ENCODE measurements at regions of chr2 and their contacts with region 1.

Region 1: DNA sequence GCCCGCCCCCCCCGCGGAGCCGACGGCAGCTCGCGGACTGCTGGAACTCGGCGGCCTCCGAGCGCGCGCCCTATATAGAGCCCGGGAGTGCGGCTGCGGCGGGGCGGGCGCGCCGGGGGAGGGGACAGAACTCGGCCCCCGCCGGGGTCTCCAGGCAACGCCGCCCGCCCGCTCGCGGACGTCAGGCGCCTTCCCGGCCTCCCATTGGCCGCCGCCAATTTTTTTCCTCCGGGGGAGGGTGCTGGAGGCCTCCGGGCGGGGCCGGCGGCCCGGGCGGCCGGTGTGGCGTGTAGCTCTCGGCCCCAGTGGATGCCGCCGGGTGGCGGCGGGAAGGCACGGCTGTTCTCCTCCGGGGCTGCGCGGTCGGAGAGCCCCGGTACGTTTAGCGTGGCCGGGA is at the start of gene ZFP36L2:
- DNase-seq: peak; percentile 95 to 96
- ATAC-seq: peak; percentile 60 to 83 (median 74)
- H3K4me3 ChIP-seq: peak within 1 kb of the TSS; percentile 97
- H3K4me3 Mint-ChIP-seq: peak within 1 kb of the TSS; percentile 98
- H3K27ac ChIP-seq: peak within 1 kb of the TSS; percentile 97
- H3K27ac Mint-ChIP-seq: peak within 1 kb of the TSS; percentile 90 to 99
- H3K4me1 ChIP-seq: peaks cover 32% of the 10 kb centered on the region
- H3K4me1 Mint-ChIP-seq: peaks cover 44 to 50% of the 10 kb centered on the region in 2 donors
- H3K27me3 ChIP-seq: no peaks in the 10 kb centered on the region
- H3K27me3 Mint-ChIP-seq: no peaks in the 10 kb centered on the region
- CTCF ChIP-seq: no peak
- total RNA-seq, gene ZFP36L2: 376 to 428 (median 418) TPM

Region 2: GRCh38 chr2:42944779-42945415 is 281.7 kb before region 1 on chr2:
- intact Hi-C with region 1: loop called (anchors 1 kb)
- DNase-seq: no peak
- ATAC-seq: no peak
- H3K4me3 ChIP-seq: no peak overlapping the region
- H3K4me3 Mint-ChIP-seq: no peak overlapping the region
- H3K27ac ChIP-seq: no peak overlapping the region
- H3K27ac Mint-ChIP-seq: no peak overlapping the region
- H3K4me1 ChIP-seq: peaks cover 9% of the 10 kb centered on the region
- H3K4me1 Mint-ChIP-seq: peaks cover 5 to 16% of the 10 kb centered on the region in 2 donors
- H3K27me3 ChIP-seq: no peaks in the 10 kb centered on the region
- H3K27me3 Mint-ChIP-seq: peaks cover 0 to 3% of the 10 kb centered on the region in 2 donors
- CTCF ChIP-seq: no peak

Region 3: DNA sequence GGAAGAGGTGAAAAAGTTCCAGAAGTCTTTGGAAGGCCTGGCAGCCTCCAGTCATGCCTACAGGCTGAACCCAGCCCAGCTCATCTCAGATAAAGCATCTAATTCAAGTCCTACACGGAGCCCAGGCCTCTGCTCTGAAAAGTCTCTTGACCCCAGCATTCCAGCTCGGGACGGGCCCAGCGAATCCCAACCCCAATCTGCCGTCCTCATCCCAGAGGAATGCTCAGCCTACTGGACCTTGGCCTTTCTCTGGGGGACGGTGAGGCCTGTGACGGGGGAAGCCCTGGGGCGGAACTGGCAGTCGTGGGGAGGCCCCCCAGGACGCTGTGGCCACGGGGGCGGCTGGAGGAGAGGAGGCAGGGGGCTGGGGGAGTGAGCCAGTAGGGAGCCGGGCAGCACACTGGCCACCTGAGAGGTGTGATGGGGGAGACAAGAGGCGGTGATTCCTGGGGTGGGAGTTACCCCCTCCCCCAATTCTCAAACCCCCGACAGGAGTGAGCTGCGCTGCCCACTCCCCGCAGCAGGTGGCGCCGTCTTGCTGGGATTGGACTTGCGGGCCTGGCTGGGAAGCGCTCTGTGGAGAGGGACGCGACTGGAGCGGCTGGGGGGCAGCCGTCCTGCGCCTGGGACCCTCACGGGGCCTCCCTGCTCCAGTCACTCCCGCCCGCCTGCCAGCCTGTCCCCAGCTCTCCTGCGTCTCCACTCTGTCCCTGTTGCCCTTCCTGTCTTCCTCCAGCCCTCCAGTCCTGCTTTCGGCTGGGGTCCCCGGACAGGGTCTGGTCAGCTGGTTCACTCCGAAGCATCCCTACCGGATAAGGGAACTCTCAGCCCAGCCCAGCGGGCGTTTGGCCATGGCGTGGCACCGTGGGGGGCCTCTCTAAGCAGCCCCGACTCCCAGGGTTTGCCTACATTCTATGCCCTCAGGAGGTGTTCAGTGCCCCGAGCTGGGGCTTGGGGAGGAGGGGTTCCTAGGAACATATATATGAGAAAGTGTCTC is 251.5 kb before region 1 on chr2:
- intact Hi-C with region 1: loop called (anchors 1 kb)
- DNase-seq: peak; percentile 39 to 70
- ATAC-seq: peak; percentile 40 to 78 (median 70)
- H3K4me3 ChIP-seq: no peak overlapping the region
- H3K4me3 Mint-ChIP-seq: no peak overlapping the region
- H3K27ac ChIP-seq: no peak overlapping the region
- H3K27ac Mint-ChIP-seq: no peak overlapping the region
- H3K4me1 ChIP-seq: peaks cover 23% of the 10 kb centered on the region
- H3K4me1 Mint-ChIP-seq: peaks cover 6 to 10% of the 10 kb centered on the region in 2 donors
- H3K27me3 ChIP-seq: no peaks in the 10 kb centered on the region
- H3K27me3 Mint-ChIP-seq: peaks cover 0 to 12% of the 10 kb centered on the region in 2 donors
- CTCF ChIP-seq: peak; percentile 67

Region 4: GRCh38 chr2:43269074-43269572 is 42.6 kb after region 1 on chr2:
- intact Hi-C with region 1: no loop called
- DNase-seq: no peak
- ATAC-seq: no peak
- H3K4me3 ChIP-seq: no peak overlapping the region
- H3K4me3 Mint-ChIP-seq: no peak overlapping the region
- H3K27ac ChIP-seq: no peak overlapping the region
- H3K27ac Mint-ChIP-seq: no peak overlapping the region
- H3K4me1 ChIP-seq: no peaks in the 10 kb centered on the region
- H3K4me1 Mint-ChIP-seq: peaks cover 5 to 6% of the 10 kb centered on the region in 2 donors
- H3K27me3 ChIP-seq: no peaks in the 10 kb centered on the region
- H3K27me3 Mint-ChIP-seq: no peaks in the 10 kb centered on the region
- CTCF ChIP-seq: no peak

Region 5: DNA sequence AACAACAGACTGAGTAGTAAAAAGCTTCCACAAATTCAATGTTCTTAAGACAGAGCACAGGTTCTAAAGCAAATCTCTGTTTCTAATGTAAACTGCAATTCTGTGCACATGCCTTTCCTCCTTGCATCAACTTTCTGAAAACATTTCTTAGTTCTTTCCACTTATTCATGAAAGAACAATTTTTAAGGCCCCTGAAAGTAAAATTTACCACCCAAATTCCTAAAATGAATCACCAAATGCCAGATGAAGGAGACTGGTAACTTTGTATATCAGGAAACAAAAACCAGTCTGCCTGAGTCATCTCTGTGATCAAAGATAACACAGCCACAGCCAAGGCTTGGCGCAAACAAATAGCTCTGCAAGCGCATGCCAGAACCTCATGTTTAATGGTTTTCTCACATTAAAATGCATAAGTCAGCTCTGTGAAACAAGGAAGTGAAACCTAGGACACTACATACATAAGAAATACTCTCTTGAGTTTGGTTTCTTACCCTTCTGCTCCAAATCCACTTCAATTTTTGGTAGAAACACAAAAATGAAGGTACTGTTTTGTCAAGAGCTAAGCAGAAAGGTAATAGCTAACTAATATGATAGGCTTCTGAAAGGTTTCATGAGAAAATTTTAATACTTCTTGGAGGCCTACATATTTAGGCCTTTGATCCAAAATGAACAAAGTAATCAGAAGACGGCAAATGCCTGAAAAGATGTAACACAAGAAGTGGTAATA is 199.9 kb after region 1 on chr2:
- intact Hi-C with region 1: loop called (anchors 5 kb)
- DNase-seq: peak; percentile 29 to 73
- ATAC-seq: peak; percentile 92 to 95 (median 93)
- H3K4me3 ChIP-seq: no peak overlapping the region
- H3K4me3 Mint-ChIP-seq: peak overlapping the region; percentile 76
- H3K27ac ChIP-seq: peak overlapping the region; percentile 74
- H3K27ac Mint-ChIP-seq: peak overlapping the region; percentile 91 to 97
- H3K4me1 ChIP-seq: peaks cover 21% of the 10 kb centered on the region
- H3K4me1 Mint-ChIP-seq: peaks cover 35 to 41% of the 10 kb centered on the region in 2 donors
- H3K27me3 ChIP-seq: no peaks in the 10 kb centered on the region
- H3K27me3 Mint-ChIP-seq: no peaks in the 10 kb centered on the region
- CTCF ChIP-seq: no peak